Cardiac septum (tissue), 1 donor: ENCODE measurements at regions of chr5 and their contacts with region 1.

Region 1: GRCh38 chr5:164504141-164504772 is 998.8 kb downstream of the MAT2B start:
- DNase-seq: no peak

Region 2: DNA sequence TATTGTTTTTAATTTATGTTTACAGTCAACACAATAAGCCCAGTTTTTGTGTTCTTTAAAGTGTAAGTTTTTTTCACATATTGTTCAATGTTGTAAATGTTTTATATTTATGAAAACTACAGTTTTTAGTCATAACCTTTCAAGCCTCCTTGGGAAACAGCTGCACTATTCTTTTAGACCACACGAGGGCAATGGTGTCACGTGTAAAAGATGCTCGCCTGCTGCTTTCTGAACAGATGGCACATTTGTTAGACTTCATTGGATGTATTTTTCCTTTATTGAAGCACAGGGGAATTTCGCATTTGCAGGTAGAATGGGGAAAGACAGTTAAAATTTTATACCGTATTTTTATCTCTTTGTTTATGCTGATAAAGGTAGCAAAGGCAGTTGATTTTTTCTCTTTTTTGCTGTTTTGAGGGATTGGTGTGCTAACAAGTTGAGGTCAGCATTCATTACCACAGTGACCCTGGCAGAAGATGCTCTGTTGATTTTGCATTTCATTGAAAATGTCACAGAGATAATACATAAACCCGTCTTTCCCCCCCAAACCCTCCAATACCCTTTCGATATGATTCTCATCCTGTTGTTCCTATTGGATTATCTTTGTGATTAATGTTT is 939.8 kb before region 1 on chr5:
- intact Hi-C with region 1: loop called (anchors 10 kb)
- DNase-seq: no peak

Region 3: DNA sequence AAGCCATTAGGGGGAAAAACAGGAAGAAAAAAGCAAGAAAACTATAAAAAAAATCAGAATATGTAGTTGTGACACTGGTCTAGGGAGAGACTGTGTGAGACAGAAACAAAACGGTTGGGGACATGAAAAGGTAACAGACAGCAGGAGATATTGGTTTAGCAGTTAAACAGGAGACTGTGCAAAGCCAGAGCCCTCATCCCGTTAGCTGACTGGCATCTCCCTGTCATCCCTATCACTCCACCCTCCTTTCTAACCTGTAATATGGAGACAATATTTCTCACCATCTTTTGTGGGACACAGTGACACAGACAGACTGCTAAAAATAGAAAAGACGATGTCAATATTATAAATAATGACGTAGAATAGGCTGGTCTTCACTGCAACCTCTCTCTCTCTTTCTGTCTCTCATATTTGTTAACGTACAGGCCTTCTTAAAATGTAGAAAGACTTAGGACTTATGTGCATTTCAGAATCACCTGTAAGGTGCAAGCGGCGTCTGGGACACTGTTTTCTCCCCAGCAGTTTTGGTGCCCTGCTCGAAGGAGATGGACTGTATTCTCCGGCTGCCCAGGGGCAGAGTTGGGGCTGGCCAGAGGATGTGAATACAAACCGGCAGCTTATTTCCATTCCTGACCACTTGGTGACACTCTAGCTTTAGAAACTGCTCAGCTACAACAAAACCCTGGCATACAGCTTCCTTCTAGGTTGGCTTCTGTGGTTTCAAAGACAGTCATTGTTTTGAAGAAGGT is 808.3 kb before region 1 on chr5:
- intact Hi-C with region 1: loop called (anchors 10 kb)
- DNase-seq: no peak

Region 4: GRCh38 chr5:164013077-164013670 is 491.1 kb before region 1 on chr5:
- intact Hi-C with region 1: loop called (anchors 5 kb)
- DNase-seq: no peak